ENCODE measurements at regions of chr18 and their contacts with region 1.

Region 1: DNA sequence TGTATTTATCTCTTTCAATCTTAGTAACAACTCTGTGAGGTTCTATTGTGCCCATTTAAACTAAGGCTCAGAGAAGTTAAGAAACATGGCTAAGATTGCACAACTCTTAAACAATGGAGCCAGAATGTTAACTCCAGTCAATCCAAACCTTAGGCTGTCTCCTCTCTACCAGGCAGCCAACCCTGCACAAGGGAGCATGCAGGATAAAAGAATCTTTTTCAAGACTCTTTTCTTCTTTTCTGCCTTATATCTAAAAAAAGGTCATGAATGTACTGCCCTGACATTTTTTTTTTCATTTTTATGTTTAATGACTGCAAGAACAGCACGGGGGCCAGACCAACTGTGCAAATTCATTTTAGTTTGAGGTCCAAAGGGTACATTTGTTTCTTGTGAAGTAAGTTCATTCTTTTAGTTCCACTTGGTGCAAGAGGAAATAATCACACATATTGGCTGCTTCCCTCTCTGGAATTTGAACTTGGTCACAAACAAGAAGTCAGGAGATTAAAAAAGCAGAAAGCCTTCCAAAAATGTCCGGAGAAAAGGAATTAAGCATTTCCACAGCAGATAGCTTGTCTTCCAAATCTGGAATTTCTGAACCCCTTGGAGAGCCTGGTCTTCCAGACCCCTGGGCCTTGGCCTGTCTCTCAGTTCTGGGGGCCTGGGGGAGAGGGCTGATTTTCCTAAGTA is 96.0 kb upstream of the RIOK3 start:
- DNase-seq: no peak
- ATAC-seq: no peak
- H3K4me3 ChIP-seq: no peak overlapping the region
- H3K27ac ChIP-seq: no peak overlapping the region
- H3K4me1 ChIP-seq: peaks cover 21% of the 10 kb centered on the region
- H3K27me3 ChIP-seq: no peaks in the 10 kb centered on the region
- CTCF ChIP-seq: no peak
- EP300 ChIP-seq: no peak
- POLR2A ChIP-seq: no peak
- RAD21 ChIP-seq: no peak

Region 2: GRCh38 chr18:22928339-22928738 is 428.7 kb before region 1 on chr18:
- CTCF ChIA-PET with region 1: interaction called, 5 read pairs
- POLR2A ChIA-PET with region 1: no interaction called
- RAD21 ChIA-PET with region 1: interaction called, 3 read pairs
- SMC1A ChIA-PET with region 1: interaction called, 10 read pairs
- in situ Hi-C with region 1: no loop called
- intact Hi-C with region 1: no loop called
- DNase-seq: no peak
- ATAC-seq: no peak
- H3K4me3 ChIP-seq: no peak overlapping the region
- H3K27ac ChIP-seq: no peak overlapping the region
- H3K4me1 ChIP-seq: peaks cover 6% of the 10 kb centered on the region
- H3K27me3 ChIP-seq: no peaks in the 10 kb centered on the region
- CTCF ChIP-seq: no peak
- EP300 ChIP-seq: no peak
- POLR2A ChIP-seq: no peak
- RAD21 ChIP-seq: no peak

Region 3: DNA sequence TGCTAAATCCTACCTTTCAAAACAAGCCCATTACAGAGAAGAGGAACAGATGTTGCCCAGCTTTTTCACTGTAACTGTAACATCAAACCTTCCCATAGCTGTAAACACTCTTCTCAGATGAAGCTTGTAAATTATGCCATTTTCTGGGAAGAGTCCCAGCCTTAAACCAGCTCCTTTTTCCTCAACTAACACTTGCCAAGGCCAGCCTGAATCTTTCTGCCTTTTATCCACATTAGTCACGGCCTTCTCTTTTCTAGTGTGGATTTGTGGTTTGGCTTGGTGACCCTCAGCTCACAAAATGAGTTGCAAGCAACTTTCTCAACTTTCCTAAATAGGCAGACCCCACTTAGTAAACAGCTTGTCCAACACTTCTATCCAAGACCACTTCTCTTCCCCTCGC is 131.6 kb before region 1 on chr18:
- CTCF ChIA-PET with region 1: interaction called, 8 read pairs
- POLR2A ChIA-PET with region 1: interaction called, 7 read pairs
- RAD21 ChIA-PET with region 1: interaction called, 18 read pairs
- SMC1A ChIA-PET with region 1: interaction called, 78 read pairs
- in situ Hi-C with region 1: no loop called
- intact Hi-C with region 1: loop called (anchors 1 kb)
- DNase-seq: no peak
- ATAC-seq: no peak
- H3K4me3 ChIP-seq: no peak overlapping the region
- H3K27ac ChIP-seq: peak overlapping the region; percentile 70
- H3K4me1 ChIP-seq: peaks cover 58% of the 10 kb centered on the region
- H3K27me3 ChIP-seq: no peaks in the 10 kb centered on the region
- CTCF ChIP-seq: no peak
- EP300 ChIP-seq: no peak
- POLR2A ChIP-seq: no peak
- RAD21 ChIP-seq: no peak

Region 4: DNA sequence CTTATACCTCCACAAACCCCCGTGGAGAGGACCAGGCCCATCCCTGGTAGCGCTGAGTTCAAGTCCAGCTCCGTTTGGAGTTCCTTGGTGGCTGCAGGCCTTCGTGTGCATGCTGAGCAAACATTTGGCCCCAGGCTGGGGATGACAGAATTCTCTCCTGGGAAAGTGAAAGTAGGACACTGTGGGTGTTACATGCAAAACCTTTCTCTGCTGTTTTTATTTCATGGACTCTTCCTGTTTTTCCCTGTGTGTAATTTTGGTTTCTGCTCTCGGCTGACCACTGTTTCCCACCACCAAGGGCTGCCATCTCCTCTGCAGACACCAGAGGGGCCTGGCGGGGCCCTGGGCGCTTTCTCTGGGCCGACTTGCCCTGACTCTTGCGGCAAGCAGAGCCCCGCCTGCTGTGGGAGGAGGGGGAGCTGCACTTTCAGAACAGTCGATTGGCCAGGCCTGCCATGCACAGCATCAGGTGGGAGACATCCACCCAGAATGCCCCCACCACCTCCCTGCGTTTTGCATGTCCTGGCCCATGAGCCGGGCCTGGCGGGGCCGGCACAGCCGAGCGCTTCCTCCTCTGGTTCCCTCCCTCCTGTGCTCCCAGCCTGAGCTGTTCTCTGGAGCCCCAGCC is 119.4 kb before region 1 on chr18:
- CTCF ChIA-PET with region 1: interaction called, 7 read pairs
- POLR2A ChIA-PET with region 1: interaction called, 9 read pairs
- RAD21 ChIA-PET with region 1: interaction called, 8 read pairs
- SMC1A ChIA-PET with region 1: interaction called, 21 read pairs
- in situ Hi-C with region 1: loop called (anchors 5 kb)
- intact Hi-C with region 1: loop called (anchors 1 kb)
- DNase-seq: peak; percentile 81
- ATAC-seq: peak; percentile 86
- H3K4me3 ChIP-seq: no peak overlapping the region
- H3K27ac ChIP-seq: peak overlapping the region; percentile 76
- H3K4me1 ChIP-seq: peaks cover 50% of the 10 kb centered on the region
- H3K27me3 ChIP-seq: no peaks in the 10 kb centered on the region
- CTCF ChIP-seq: peak; percentile 21 to 55 (median 45); a peak in 4 of 6 replicates
- EP300 ChIP-seq: peak; percentile 56 to 87; a peak in 3 of 4 replicates
- POLR2A ChIP-seq: no peak
- RAD21 ChIP-seq: peak; percentile 63

Region 5: DNA sequence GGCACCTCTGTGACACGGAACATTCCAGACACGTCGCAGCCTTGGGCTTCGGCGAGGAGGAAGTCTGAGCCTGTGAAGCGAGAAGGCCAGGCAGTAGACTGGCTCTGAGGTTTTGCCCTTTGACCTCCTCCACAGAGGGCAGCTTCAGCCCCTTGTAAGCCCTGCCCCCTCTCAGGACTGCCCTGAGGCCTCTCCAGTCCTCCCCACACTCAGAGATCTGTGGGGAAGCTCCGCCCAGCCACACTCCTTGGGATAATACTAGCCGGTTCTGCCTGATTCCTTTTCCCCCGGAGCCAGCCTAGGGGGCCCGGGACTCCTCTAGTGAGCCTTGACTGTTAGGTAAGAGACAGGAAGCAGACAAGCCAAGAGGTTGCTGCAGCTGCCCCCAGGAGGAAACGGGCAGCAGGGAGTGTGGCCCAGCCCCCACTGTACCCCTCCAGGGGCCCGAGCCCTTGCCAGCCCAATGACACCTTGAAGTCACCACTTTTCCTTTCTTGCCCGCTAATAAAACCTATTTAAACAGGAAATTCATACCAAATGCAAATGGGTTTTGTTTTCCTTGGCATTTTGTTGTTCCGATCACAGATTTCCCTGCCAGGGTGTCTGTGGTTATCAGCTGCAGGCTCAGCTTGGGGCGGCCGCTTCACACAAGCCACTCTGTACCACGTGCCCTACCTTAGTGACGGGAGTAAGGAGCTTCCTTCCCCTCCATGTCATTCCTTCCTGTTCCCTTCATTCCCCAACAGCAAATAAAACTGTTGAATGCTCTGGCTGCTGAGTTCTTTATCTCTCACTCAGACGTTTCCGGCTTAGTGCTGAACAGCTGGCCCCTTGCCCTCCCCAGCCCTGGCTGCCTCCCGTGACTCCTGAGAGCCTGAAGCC is 97.1 kb before region 1 on chr18:
- CTCF ChIA-PET with region 1: interaction called, 7 read pairs
- POLR2A ChIA-PET with region 1: interaction called, 5 read pairs
- RAD21 ChIA-PET with region 1: interaction called, 13 read pairs
- SMC1A ChIA-PET with region 1: interaction called, 15 read pairs
- in situ Hi-C with region 1: no loop called
- intact Hi-C with region 1: no loop called
- DNase-seq: no peak
- ATAC-seq: peak; percentile 82
- H3K4me3 ChIP-seq: peak overlapping the region; percentile 28; the same call in 1 of the 2 replicates
- H3K27ac ChIP-seq: peak overlapping the region; percentile 77
- H3K4me1 ChIP-seq: peaks cover 22% of the 10 kb centered on the region
- H3K27me3 ChIP-seq: no peaks in the 10 kb centered on the region
- CTCF ChIP-seq: no peak
- EP300 ChIP-seq: peak in 1 of 2 experiments; percentile 50; a peak in 1 of 4 replicates
- POLR2A ChIP-seq: no peak; the same call in none of the 2 replicates
- RAD21 ChIP-seq: no peak

Region 6: GRCh38 chr18:23307567-23308295 is 49.3 kb before region 1 on chr18:
- CTCF ChIA-PET with region 1: interaction called, 3 read pairs
- POLR2A ChIA-PET with region 1: no interaction called
- RAD21 ChIA-PET with region 1: interaction called, 10 read pairs
- SMC1A ChIA-PET with region 1: interaction called, 8 read pairs
- in situ Hi-C with region 1: no loop called
- intact Hi-C with region 1: loop called (anchors 5 kb)
- DNase-seq: peak; percentile 39
- ATAC-seq: peak; percentile 78
- H3K4me3 ChIP-seq: no peak overlapping the region
- H3K27ac ChIP-seq: peak overlapping the region; percentile 47
- H3K4me1 ChIP-seq: peaks cover 20% of the 10 kb centered on the region
- H3K27me3 ChIP-seq: no peaks in the 10 kb centered on the region
- CTCF ChIP-seq: no peak
- EP300 ChIP-seq: 0 out of 4 replicates have a peak, but pooled peaks of 1 of the 2 experiments have one; percentile 34
- POLR2A ChIP-seq: no peak
- RAD21 ChIP-seq: no peak

Measured in GM12878 (cell line).